Panc1 (cell line): ENCODE measurements at regions of chr10 and their contacts with region 1.

Region 1: DNA sequence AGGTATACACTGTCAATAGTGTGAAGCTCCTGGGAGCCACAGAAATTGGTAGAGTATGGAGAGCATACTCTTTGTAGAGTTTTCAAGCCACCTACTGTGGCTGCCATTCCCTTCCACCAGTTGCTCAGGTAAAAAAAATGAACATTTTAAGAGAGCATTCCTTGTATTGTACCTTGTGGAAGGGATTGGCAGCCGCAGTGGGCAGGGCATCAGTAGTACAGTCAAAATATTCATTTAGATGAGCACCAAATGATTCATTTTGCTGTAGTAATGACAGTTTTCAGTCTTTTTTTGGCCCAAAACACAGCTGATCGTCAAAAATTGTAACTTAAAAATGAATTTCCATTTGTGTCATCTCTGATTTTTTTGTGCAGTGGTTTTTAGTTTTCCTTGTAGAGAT is 304.9 kb downstream of the ATRNL1 start:
- DNase-seq: no peak
- ATAC-seq: no peak
- H3K4me3 ChIP-seq: no peak overlapping the region
- H3K27ac ChIP-seq: no peak overlapping the region
- H3K4me1 ChIP-seq: no peaks in the 10 kb centered on the region
- H3K27me3 ChIP-seq: no peaks in the 10 kb centered on the region
- CTCF ChIP-seq: no peak

Region 2: GRCh38 chr10:114157909-114158308 is 1240.1 kb before region 1 on chr10:
- CTCF ChIA-PET with region 1: no interaction called
- POLR2A ChIA-PET with region 1: interaction called, 11 read pairs
- in situ Hi-C with region 1: no loop called
- intact Hi-C with region 1: no loop called
- DNase-seq: no peak
- ATAC-seq: no peak
- H3K4me3 ChIP-seq: no peak overlapping the region
- H3K27ac ChIP-seq: no peak overlapping the region
- H3K4me1 ChIP-seq: peaks cover 1% of the 10 kb centered on the region; the same call in 1 of the 2 replicates
- H3K27me3 ChIP-seq: no peaks in the 10 kb centered on the region
- CTCF ChIP-seq: peak; percentile 58

Region 3: GRCh38 chr10:115026056-115026745 is 371.8 kb before region 1 on chr10:
- CTCF ChIA-PET with region 1: no interaction called
- POLR2A ChIA-PET with region 1: no interaction called
- in situ Hi-C with region 1: no loop called
- intact Hi-C with region 1: no loop called
- DNase-seq: no peak
- ATAC-seq: no peak
- H3K4me3 ChIP-seq: no peak overlapping the region
- H3K27ac ChIP-seq: no peak overlapping the region
- H3K4me1 ChIP-seq: no peaks in the 10 kb centered on the region
- H3K27me3 ChIP-seq: no peaks in the 10 kb centered on the region
- CTCF ChIP-seq: no peak; the same call in 1 of the 2 replicates

Region 4: GRCh38 chr10:115379064-115379463 is 19.0 kb before region 1 on chr10:
- CTCF ChIA-PET with region 1: no interaction called
- POLR2A ChIA-PET with region 1: no interaction called
- in situ Hi-C with region 1: no loop called
- intact Hi-C with region 1: no loop called
- DNase-seq: no peak
- ATAC-seq: no peak
- H3K4me3 ChIP-seq: no peak overlapping the region
- H3K27ac ChIP-seq: no peak overlapping the region
- H3K4me1 ChIP-seq: no peaks in the 10 kb centered on the region
- H3K27me3 ChIP-seq: no peaks in the 10 kb centered on the region
- CTCF ChIP-seq: no peak

Region 5: GRCh38 chr10:115409347-115409746 is 11.3 kb after region 1 on chr10:
- CTCF ChIA-PET with region 1: no interaction called
- POLR2A ChIA-PET with region 1: no interaction called
- in situ Hi-C with region 1: no loop called
- intact Hi-C with region 1: no loop called
- DNase-seq: no peak
- ATAC-seq: no peak
- H3K4me3 ChIP-seq: no peak overlapping the region
- H3K27ac ChIP-seq: no peak overlapping the region
- H3K4me1 ChIP-seq: no peaks in the 10 kb centered on the region
- H3K27me3 ChIP-seq: no peaks in the 10 kb centered on the region
- CTCF ChIP-seq: no peak

Region 6: DNA sequence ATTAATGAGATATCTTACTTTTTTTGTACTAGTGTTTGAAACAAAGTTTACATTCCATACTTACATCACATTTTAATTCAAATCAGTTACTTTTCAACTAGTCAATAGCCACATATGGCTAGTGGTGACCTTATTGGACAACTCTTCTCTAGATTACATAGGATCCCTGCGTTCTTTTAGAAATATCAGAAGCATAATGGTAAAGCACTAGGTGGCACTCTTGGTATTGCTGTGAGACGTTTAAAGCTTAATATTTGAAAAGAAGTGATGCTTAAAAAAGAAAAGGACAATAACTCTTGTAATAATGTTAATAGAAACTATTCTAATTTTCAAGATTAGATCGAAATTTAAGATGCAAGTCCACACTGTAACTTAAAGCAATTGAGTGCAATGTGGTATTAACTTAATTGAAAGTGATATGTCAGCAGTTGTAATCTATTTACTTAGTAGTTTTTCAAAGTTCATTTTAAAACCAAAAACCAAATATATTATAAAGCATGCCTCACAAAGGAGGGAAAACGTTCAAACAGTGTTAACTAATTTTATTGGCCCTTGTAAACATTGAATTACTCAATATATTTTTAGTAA is 34.3 kb after region 1 on chr10:
- CTCF ChIA-PET with region 1: no interaction called
- POLR2A ChIA-PET with region 1: no interaction called
- in situ Hi-C with region 1: no loop called
- intact Hi-C with region 1: no loop called
- DNase-seq: no peak
- ATAC-seq: 0 out of 2 replicates have a peak, but pooled peaks have one; percentile 65
- H3K4me3 ChIP-seq: no peak overlapping the region
- H3K27ac ChIP-seq: no peak overlapping the region
- H3K4me1 ChIP-seq: no peaks in the 10 kb centered on the region
- H3K27me3 ChIP-seq: no peaks in the 10 kb centered on the region
- CTCF ChIP-seq: peak; percentile 68; the same call in 1 of the 2 replicates